Activated CD4-positive, alpha-beta T cell treated with anti-CD3 and anti-CD28 coated beads for 36 hours (primary cell): ENCODE measurements at regions of chr3 and their contacts with region 1.

Region 1: GRCh38 chr3:171459942-171460724 is at the start of gene TNIK:
- DNase-seq: peak; percentile 96
- ATAC-seq: peak; percentile 82
- H3K4me3 Mint-ChIP-seq: peak within 1 kb of the TSS; percentile 94
- H3K27ac Mint-ChIP-seq: peak within 1 kb of the TSS; percentile 95
- H3K4me1 Mint-ChIP-seq: peaks cover 40% of the 10 kb centered on the region
- H3K27me3 Mint-ChIP-seq: no peaks in the 10 kb centered on the region
- total RNA-seq, gene TNIK: 28.8 to 34.2 TPM

Region 2: DNA sequence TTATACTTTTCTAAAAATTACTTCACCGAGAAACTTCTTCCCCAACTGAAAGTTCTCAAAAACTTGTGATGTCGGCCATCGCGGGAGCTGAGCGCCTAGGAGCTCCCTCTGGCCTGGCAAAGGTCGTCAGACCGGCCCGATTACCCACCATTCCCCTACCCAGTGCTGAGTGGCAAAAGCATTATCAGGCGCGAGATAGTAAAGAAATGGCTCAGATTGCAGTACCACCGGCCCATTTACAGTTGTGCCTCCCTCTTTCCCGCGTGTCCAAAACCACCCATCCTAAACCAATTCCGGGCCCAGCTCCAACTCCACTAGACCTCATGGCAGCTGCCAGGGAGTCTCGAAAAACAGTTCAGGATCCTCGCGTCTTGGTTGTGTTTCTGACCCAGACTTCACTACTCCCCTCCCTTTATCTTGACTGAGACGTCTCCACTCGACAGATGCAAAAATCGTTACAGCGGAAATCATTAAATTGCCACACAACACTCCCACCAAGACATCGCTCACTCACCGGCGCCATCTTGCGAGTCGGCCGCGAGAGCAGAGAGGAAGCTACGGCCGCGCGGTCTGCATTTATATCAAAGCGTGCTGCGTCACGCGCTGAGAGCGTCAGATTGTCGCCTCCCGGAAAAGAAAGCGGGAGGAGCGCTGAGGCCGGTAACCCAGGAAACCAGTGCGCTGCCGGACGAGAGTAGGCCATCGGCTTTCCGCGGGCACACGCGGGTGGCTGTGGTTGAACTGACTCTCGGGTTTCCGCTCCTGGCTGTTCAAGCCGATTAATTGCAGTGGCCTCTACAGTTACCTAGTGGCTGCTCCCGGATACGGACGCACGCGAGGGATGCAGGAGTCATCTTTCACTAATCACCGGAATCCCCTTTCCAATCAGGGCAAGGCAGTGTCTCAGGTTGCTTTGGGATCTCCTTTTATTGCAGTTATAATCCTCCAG is 590.2 kb before region 1 on chr3 and contains the start of gene RPL22L1:
- CTCF ChIA-PET with region 1: no interaction called
- POLR2A ChIA-PET with region 1: interaction called, 3 read pairs
- intact Hi-C with region 1: loop called in 1 of 2 experiments (anchors 5 kb)
- DNase-seq: peak; percentile 96
- ATAC-seq: peak; percentile 95
- H3K4me3 Mint-ChIP-seq: peak within 1 kb of the TSS; percentile 94
- H3K27ac Mint-ChIP-seq: peak within 1 kb of the TSS; percentile 99
- H3K4me1 Mint-ChIP-seq: peaks cover 15% of the 10 kb centered on the region
- H3K27me3 Mint-ChIP-seq: no peaks in the 10 kb centered on the region
- total RNA-seq, gene RPL22L1: 186 to 441 TPM

Region 3: GRCh38 chr3:171162986-171163723 is 297.0 kb before region 1 on chr3:
- CTCF ChIA-PET with region 1: no interaction called
- POLR2A ChIA-PET with region 1: interaction called, 3 read pairs
- intact Hi-C with region 1: loop called (anchors 1 to 5 kb)
- DNase-seq: peak; percentile 25
- ATAC-seq: no peak
- H3K4me3 Mint-ChIP-seq: no peak overlapping the region
- H3K27ac Mint-ChIP-seq: no peak overlapping the region
- H3K4me1 Mint-ChIP-seq: peaks cover 28% of the 10 kb centered on the region
- H3K27me3 Mint-ChIP-seq: no peaks in the 10 kb centered on the region

Region 4: GRCh38 chr3:171248425-171249111 is 211.6 kb before region 1 on chr3:
- CTCF ChIA-PET with region 1: no interaction called
- POLR2A ChIA-PET with region 1: interaction called, 5 read pairs
- intact Hi-C with region 1: loop called in 1 of 2 experiments (anchors 1 kb)
- DNase-seq: no peak
- ATAC-seq: peak; percentile 75
- H3K4me3 Mint-ChIP-seq: no peak overlapping the region
- H3K27ac Mint-ChIP-seq: no peak overlapping the region
- H3K4me1 Mint-ChIP-seq: peaks cover 43% of the 10 kb centered on the region
- H3K27me3 Mint-ChIP-seq: no peaks in the 10 kb centered on the region

Region 5: GRCh38 chr3:171284308-171285075 is 175.6 kb before region 1 on chr3:
- CTCF ChIA-PET with region 1: no interaction called
- POLR2A ChIA-PET with region 1: interaction called, 3 read pairs
- intact Hi-C with region 1: loop called (anchors 2 kb)
- DNase-seq: peak; percentile 27
- ATAC-seq: peak; percentile 62
- H3K4me3 Mint-ChIP-seq: no peak overlapping the region
- H3K27ac Mint-ChIP-seq: peak overlapping the region; percentile 62
- H3K4me1 Mint-ChIP-seq: peaks cover 65% of the 10 kb centered on the region
- H3K27me3 Mint-ChIP-seq: no peaks in the 10 kb centered on the region

Region 6: DNA sequence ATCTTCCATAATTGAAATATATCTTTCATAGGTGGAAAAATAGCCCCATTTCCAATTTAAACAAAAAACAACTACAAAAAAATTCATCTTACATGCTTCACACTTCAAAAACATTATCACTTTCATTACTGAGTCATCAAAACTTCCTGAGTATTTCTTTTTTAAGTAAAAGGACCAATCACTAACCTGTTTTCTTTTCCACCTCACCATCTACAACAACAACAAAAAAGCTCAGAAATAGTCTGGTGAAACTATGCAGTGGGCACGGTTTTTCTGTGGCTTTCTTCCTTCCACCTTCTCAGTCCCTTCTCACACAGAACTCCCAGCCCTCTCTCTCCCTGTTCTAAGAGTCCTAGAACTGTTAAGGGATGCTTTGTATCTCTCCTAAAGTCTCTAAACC is 20.4 kb after region 1 on chr3:
- CTCF ChIA-PET with region 1: interaction called, 3 read pairs
- POLR2A ChIA-PET with region 1: no interaction called
- intact Hi-C with region 1: loop called in 1 of 2 experiments (anchors 1 kb)
- DNase-seq: no peak
- ATAC-seq: peak; percentile 82
- H3K4me3 Mint-ChIP-seq: peak overlapping the region; percentile 0
- H3K27ac Mint-ChIP-seq: peak overlapping the region; percentile 59
- H3K4me1 Mint-ChIP-seq: peaks cover 15% of the 10 kb centered on the region
- H3K27me3 Mint-ChIP-seq: no peaks in the 10 kb centered on the region

Region 7: GRCh38 chr3:171561596-171562323 is 101.6 kb after region 1 on chr3:
- CTCF ChIA-PET with region 1: interaction called, 7 read pairs
- POLR2A ChIA-PET with region 1: no interaction called
- intact Hi-C with region 1: loop called (anchors 1 to 2 kb)
- DNase-seq: peak; percentile 17
- ATAC-seq: peak; percentile 73
- H3K4me3 Mint-ChIP-seq: peak overlapping the region; percentile 58
- H3K27ac Mint-ChIP-seq: peak overlapping the region; percentile 94
- H3K4me1 Mint-ChIP-seq: peaks cover 36% of the 10 kb centered on the region
- H3K27me3 Mint-ChIP-seq: no peaks in the 10 kb centered on the region